Activated CD4-positive, alpha-beta memory T cell treated with anti-CD3 and anti-CD28 coated beads, Interleukin-2, amount 10 ng/mL, durations not matched to agents 7 days and 5 days (primary cell): ENCODE measurements at regions of chr5 and their contacts with region 1.

Region 1: DNA sequence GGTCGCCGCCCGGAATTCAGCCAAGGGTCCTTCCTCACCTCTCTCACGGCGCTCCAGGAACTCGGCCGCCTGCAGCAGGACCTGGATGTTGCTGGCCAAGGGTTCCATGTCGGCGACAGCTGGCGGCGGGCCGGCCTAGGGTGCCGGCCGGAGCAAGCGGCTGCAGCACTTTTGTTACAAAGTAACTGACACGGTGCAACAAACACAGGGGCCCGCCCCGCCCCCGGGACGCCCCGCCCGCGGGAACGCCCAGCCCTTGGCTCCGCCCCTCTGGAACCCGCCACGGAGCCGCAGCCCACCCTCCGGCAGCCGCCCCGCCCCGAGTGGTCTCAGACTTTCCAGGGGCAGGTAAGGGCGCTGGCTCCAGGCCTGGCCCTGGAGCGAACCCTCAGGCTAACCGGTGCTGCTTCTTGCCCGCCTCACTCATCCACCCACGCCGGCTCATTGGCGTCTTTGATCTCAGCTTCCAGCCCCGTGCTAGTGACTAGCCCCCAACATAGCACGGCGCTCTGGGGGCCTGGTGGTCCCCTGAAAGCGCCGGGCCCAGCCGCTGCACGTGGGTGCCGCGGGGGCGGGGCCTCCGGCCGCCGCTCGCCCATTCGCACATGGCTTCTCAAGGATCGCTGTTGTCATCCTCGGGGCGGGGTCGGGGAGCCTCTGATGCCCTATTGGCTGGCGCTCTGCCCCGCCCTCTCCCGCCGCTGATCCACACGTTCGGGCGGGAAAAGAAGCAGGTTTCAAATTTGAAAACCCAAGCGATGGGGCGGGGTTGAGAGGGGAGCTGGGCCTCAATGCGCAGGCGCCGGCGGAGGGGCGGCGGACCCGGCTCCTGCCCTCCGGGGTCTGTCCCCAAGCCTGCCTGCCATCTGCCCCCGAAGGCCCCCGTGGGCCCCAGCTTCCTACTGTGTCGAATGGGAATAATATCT is at the start of gene MXD3:
- DNase-seq: peak; percentile 99
- H3K4me3 Mint-ChIP-seq: peak within 1 kb of the TSS; percentile 94
- H3K27ac Mint-ChIP-seq: peak within 1 kb of the TSS; percentile 89
- H3K4me1 Mint-ChIP-seq: peaks cover 66% of the 10 kb centered on the region
- H3K27me3 Mint-ChIP-seq: no peaks in the 10 kb centered on the region
- total RNA-seq, gene MXD3: 74.1 to 75.0 TPM

Region 2: DNA sequence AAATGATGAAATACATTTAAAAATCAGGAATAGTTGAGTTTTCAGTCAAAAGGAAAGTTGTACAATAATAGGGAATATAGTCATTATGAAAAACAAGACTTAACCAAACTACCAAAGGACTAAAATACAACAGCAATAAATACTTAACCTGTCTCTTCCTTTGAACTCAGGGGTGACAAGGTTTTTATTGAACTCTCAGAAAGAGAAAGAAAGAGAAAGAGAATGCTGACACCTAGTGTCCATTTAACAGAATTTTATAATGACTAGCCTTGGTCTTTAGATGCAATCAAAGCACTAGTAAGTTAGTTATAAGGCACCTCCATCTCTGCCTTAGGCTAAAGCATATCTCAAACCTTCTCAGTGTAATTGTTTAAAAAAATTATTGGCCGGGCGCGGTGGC is 352.9 kb before region 1 on chr5:
- CTCF ChIA-PET with region 1: no interaction called
- POLR2A ChIA-PET with region 1: no interaction called
- DNase-seq: no peak
- H3K4me3 Mint-ChIP-seq: no peak overlapping the region
- H3K27ac Mint-ChIP-seq: no peak overlapping the region
- H3K4me1 Mint-ChIP-seq: peaks cover 2% of the 10 kb centered on the region
- H3K27me3 Mint-ChIP-seq: no peaks in the 10 kb centered on the region

Region 3: GRCh38 chr5:177124486-177124991 is 187.4 kb before region 1 on chr5:
- CTCF ChIA-PET with region 1: interaction called, 4 read pairs
- POLR2A ChIA-PET with region 1: interaction called, 10 read pairs
- DNase-seq: no peak
- H3K4me3 Mint-ChIP-seq: no peak overlapping the region
- H3K27ac Mint-ChIP-seq: no peak overlapping the region
- H3K4me1 Mint-ChIP-seq: peaks cover 16% of the 10 kb centered on the region
- H3K27me3 Mint-ChIP-seq: peaks cover 4% of the 10 kb centered on the region

Region 4: GRCh38 chr5:177296581-177296980 is 15.4 kb before region 1 on chr5:
- CTCF ChIA-PET with region 1: interaction called, 43 read pairs
- POLR2A ChIA-PET with region 1: interaction called, 68 read pairs
- DNase-seq: no peak
- H3K4me3 Mint-ChIP-seq: no peak overlapping the region
- H3K27ac Mint-ChIP-seq: peak overlapping the region; percentile 72
- H3K4me1 Mint-ChIP-seq: peaks cover 63% of the 10 kb centered on the region
- H3K27me3 Mint-ChIP-seq: no peaks in the 10 kb centered on the region

Region 5: GRCh38 chr5:177351385-177352329 is 39.7 kb after region 1 on chr5 and contains the start of gene LMAN2:
- CTCF ChIA-PET with region 1: interaction called, 19 read pairs
- POLR2A ChIA-PET with region 1: interaction called, 48 read pairs
- DNase-seq: peak; percentile 94
- H3K4me3 Mint-ChIP-seq: peak within 1 kb of the TSS; percentile 90
- H3K27ac Mint-ChIP-seq: peak within 1 kb of the TSS; percentile 99
- H3K4me1 Mint-ChIP-seq: peaks cover 70% of the 10 kb centered on the region
- H3K27me3 Mint-ChIP-seq: no peaks in the 10 kb centered on the region
- total RNA-seq, gene LMAN2: 145 to 149 TPM

Region 6: DNA sequence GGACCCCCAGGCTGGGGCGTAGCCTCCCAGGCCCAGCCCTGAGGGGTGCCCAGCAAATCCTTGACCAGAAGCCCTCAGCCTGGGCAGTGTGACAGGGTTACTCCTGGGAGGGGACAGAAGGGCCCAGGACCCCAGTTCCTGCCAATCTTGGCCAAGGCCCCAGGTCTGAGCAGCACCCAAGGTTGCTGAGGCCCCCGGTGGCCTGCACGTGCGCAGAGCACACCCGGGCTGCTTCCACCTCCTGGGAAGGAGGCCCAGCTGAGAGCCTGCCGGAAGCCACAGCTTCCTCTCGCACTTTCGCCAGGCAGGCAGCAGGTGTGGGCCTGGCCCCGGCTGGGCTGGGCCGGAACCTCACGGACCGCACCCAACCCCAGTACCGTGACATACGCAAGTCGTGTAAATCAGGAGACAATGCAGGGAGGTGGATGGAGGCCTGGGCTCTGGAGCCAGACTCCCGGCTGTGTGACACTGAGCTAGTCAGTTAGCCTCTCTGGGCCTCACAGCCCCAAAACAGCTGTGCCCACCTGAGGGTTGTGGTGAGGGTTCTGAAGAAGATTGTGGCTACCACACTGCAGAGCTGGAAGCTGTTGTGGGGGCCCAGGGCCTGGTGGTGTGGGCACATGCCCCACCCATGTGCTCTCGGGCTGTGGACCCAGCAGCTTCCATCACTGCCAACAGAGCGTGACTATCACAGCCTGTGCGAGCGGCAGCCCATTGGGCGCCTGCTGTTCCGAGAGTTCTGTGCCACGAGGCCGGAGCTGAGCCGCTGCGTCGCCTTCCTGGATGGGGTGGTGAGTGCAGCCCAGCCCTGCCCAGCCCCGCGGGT is 119.5 kb after region 1 on chr5:
- CTCF ChIA-PET with region 1: interaction called, 10 read pairs
- POLR2A ChIA-PET with region 1: interaction called, 25 read pairs
- DNase-seq: peak; percentile 89
- H3K4me3 Mint-ChIP-seq: peak overlapping the region; percentile 91
- H3K27ac Mint-ChIP-seq: peak overlapping the region; percentile 93
- H3K4me1 Mint-ChIP-seq: peaks cover 72% of the 10 kb centered on the region
- H3K27me3 Mint-ChIP-seq: no peaks in the 10 kb centered on the region